IMR-90 (cell line): ENCODE measurements at regions of chr3 and their contacts with region 1.

Region 1: GRCh38 chr3:76107935-76108570 is 322.7 kb upstream of the ZNF717 start:
- DNase-seq: peak; percentile 61
- ATAC-seq: peak; percentile 91
- H3K4me3 ChIP-seq: no peak overlapping the region
- H3K27ac ChIP-seq: no peak overlapping the region
- H3K4me1 ChIP-seq: no peaks in the 10 kb centered on the region
- H3K27me3 ChIP-seq: no peaks in the 10 kb centered on the region
- CTCF ChIP-seq: peak; percentile 86
- POLR2A ChIP-seq: no peak
- RAD21 ChIP-seq: peak; percentile 76

Region 2: GRCh38 chr3:75814797-75815196 is 293.3 kb before region 1 on chr3:
- CTCF ChIA-PET with region 1: no interaction called
- POLR2A ChIA-PET with region 1: no interaction called
- dilution Hi-C with region 1: no loop called
- in situ Hi-C with region 1: no loop called
- intact Hi-C with region 1: loop called (anchors 2 kb)
- DNase-seq: no peak
- ATAC-seq: no peak
- H3K4me3 ChIP-seq: no peak overlapping the region
- H3K27ac ChIP-seq: no peak overlapping the region
- H3K4me1 ChIP-seq: peaks cover 5% of the 10 kb centered on the region
- H3K27me3 ChIP-seq: no peaks in the 10 kb centered on the region
- CTCF ChIP-seq: no peak
- POLR2A ChIP-seq: no peak
- RAD21 ChIP-seq: no peak

Region 3: GRCh38 chr3:76024640-76025039 is 83.4 kb before region 1 on chr3:
- CTCF ChIA-PET with region 1: interaction called, 4 read pairs
- POLR2A ChIA-PET with region 1: no interaction called
- dilution Hi-C with region 1: no loop called
- in situ Hi-C with region 1: loop called (anchors 5 kb)
- intact Hi-C with region 1: loop called (anchors 1 kb)
- DNase-seq: peak; percentile 59
- ATAC-seq: peak; percentile 58; the same call in 1 of the 2 replicates
- H3K4me3 ChIP-seq: no peak overlapping the region
- H3K27ac ChIP-seq: no peak overlapping the region
- H3K4me1 ChIP-seq: peaks cover 7% of the 10 kb centered on the region
- H3K27me3 ChIP-seq: no peaks in the 10 kb centered on the region
- CTCF ChIP-seq: peak; percentile 63
- POLR2A ChIP-seq: no peak
- RAD21 ChIP-seq: peak; percentile 70